ENCODE measurements at regions of chr7 and their contacts with region 1.

Region 1: DNA sequence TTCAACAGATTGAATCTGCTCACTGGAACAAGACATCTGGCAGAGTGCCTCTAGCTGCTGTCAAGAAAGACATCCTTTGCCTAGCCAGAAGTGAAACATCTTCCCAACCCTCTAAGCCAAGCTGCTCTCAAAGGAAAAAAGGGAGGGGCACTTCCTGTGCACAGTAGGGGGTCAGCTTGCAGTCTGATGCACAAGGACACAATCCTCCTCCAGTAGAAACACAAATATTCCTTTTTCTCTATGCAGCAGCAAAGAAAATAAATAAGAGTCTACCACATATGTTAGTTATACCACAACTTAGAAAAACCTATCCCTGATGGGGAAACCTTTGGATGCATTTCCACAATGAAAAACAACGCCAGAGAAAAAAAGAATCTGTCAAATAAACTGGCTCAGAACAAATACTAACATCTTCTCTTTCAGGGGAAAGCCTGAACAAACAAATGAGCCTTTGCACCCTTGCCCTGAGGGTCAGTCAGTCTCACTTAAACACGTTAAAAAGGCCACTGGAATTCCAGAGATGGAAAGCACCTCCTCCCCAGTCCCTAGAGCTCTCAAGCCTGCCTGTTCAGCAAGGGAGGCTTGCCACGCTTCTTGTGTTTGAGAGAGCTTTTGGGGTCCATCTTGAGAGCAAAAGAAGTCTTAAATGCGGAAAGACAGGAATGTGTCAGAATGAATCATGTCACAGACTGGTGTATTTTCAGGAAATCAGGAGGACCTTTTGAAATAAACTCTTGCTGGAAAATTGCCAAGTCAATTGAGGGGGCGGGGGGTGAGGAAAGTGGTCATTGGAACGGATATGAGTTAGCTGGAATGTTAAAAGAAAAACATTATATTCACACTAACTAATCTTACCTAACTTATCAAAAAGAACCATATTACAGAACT is 7.5 kb downstream of the LAMB1 start:
- DNase-seq: no peak
- H3K4me3 ChIP-seq: no peak overlapping the region
- H3K27ac ChIP-seq: peak overlapping the region; percentile 67
- H3K4me1 ChIP-seq: peaks cover 21% of the 10 kb centered on the region
- H3K27me3 ChIP-seq: no peaks in the 10 kb centered on the region
- CTCF ChIP-seq: no peak

Region 2: DNA sequence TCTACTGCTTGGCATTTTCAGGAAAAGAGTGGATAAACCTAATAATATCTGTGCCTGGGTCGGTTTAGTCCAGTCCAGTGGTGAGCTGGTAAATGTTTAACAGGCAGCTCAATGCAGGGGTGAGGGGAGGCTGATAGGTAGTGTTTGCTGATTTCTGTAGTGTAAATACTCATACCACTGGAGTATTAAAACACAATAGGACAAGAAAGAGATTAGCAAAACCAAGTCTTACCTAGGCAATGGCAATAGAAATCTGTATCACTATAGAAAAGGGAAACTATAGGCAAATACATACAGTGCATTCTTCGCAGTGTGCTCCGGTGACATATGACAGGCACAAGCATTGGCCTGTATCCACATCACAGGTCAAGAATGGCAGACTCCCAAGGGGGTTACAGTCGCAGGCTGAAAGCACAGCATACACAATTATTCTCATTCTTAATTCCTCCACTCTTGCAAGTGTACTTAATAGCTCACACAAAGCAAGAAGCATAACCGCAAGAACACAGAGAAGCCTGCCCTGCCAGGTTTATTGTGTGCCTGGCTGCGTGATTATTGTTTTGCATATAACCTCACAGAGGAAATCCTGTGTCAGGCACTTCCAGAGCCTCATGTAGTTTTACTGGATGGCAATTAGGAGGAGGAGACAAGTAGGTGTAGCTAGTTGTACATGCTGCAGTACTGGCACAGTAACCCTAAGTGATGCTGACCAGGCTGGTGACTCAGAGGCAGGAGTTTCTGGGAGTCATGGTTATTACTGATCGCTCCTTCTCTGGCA is 99.7 kb after region 1 on chr7:
- intact Hi-C with region 1: loop called (anchors 5 kb)
- DNase-seq: peak; percentile 77
- H3K4me3 ChIP-seq: no peak overlapping the region
- H3K27ac ChIP-seq: peak overlapping the region; percentile 60
- H3K4me1 ChIP-seq: peaks cover 6% of the 10 kb centered on the region
- H3K27me3 ChIP-seq: no peaks in the 10 kb centered on the region
- CTCF ChIP-seq: no peak